ENCODE measurements at regions of chr19 and their contacts with region 1.

Region 1: DNA sequence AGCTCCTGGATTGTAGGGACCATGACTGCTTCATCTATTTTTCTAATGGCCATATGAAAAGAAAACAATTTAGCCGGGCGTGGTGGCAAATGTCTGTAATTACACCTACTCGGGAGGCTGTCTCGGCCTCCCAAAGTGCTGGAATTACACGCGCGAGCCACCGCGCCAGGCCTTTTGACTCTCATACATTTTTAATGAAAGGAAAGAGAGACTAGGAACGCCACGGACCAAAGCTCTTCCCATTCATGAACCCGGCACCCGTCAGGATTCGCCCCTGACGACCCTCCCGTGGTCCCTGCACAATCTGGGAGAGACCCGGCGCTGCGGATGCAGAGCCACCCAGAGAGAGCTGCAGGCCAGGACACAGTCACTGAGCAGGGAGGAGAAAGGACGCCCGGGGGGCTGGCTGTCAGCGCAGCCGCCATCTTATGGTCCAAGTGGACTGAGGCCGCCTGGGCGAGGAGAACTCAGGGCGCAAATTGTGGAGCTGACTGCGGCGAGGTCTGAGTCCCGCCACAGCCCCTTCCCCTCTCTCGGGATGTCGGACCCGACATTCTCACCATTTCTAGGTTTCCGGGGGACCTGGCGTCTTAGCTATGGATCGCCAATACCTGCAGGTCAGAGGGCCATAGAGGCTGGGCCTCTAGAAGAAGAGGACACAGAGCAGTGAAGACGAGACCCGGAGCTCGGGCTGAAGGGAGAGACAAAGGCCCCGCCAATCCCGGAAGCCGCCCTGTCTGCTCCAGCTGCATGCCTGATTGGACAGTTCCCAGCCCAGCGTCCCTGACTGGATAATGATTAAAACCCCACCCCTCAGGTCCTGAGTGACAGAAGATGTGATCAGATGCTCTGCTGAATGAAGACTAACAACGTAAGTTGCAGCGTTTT is at the start of gene ZNF681:
- DNase-seq: peak; percentile 89
- H3K4me3 ChIP-seq: peak within 1 kb of the TSS; percentile 75
- H3K27ac ChIP-seq: peak within 1 kb of the TSS; percentile 56
- H3K4me1 ChIP-seq: peaks cover 4% of the 10 kb centered on the region
- CTCF ChIP-seq: peak; percentile 32; the same call in 1 of the 2 replicates
- total RNA-seq, gene ZNF681: 3.1 and 4.3 TPM in 2 replicates

Region 2: DNA sequence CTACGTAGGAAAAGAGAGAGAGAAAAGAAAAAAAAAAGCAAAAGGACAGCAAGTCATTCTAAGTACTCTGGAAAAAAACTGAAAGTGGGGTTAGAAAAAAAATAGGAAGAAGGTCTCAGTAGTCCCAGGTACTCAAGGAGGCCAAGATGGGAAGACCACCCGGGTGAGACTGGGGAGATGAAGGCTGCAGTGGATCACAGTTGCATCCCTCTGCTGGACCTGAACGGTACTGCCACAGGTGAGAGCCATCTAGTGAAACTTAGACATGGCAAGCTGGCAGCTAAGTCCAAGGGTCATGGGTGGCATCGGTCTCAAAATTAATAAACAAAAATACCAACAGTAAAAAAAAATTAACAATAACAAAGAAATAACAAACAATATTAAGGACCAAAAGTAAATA is 322.1 kb before region 1 on chr19:
- CTCF ChIA-PET with region 1: no interaction called
- POLR2A ChIA-PET with region 1: no interaction called
- intact Hi-C with region 1: no loop called
- DNase-seq: peak; percentile 32
- H3K4me3 ChIP-seq: no peak overlapping the region
- H3K27ac ChIP-seq: no peak overlapping the region
- H3K4me1 ChIP-seq: no peaks in the 10 kb centered on the region
- CTCF ChIP-seq: peak; percentile 61

Region 3: DNA sequence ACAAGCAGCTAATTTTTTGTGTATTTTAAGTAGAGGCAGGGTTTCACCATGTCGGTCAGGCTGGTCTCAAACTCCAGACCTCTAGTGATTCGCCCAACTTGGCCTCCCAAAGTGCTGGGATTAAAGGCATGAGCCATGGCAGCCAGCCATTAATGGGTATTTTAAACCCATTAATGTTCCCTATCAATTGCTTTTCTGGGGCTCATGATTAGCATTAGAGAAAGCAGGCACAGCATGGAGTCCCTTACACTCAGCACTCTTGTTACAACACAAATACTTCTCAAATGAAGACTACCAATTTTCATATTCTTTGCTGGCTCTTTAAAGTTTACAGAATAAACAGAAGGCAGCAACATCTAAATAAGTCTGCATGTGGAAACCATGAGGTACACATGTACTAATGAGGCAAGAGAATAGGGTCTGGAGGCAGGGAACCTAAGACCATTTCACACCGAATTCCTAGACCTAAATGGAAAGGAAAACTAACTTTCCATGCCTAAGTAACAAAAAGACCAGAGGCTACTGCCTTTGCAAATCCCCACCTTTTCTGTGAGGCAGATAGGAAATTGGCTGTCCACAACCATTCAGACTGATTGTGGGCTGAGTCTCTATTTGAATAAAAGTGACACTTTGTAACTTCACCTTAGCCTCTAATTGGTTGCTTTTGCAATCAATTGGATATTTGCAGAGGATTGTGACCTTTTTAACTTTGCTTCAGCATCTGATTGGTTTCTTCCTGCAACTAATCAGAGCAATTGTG is 92.6 kb before region 1 on chr19:
- CTCF ChIA-PET with region 1: no interaction called
- POLR2A ChIA-PET with region 1: no interaction called
- intact Hi-C with region 1: no loop called
- DNase-seq: no peak
- H3K4me3 ChIP-seq: no peak overlapping the region
- H3K27ac ChIP-seq: no peak overlapping the region
- H3K4me1 ChIP-seq: peaks cover 6% of the 10 kb centered on the region
- CTCF ChIP-seq: no peak

Region 4: DNA sequence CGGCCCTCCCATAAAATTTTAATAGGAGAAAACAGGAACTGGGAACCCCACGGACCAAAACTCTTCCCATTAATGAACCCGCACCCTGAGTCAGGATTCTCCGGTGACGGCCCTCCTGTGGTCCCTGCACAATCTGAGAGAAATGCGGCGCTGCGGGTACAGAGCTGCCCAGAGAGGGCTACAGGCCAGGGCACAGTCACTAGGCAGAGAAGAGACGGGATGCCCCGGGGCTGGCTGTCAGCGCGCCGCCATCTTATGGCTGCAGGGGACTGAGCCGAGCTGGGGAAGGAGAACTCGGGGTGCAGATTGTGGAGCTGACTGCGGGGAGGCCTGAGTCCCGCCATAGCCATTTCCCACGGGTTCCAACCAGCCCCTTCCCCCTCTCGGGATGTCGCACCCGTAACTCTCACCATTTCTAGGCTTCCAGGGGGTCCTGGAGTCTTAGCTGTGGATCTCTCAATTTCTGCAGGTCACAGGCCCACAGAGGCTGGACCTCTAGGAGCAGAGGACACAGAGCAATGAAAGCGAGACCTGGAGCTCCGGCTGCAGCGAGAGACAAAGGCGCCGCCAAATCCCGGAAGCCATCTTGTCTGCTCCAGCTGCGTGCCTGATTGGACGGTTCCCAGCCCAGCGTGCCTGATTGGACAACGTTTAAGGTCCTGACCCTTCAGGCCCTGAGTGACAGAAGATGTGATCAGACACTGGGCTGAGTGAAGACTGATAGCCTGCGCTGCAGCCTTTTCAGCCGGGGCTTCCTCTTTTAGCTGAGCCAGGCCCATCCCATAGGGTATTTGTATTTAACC is 71.6 kb before region 1 on chr19 and contains the start of gene ZNF675:
- CTCF ChIA-PET with region 1: no interaction called
- POLR2A ChIA-PET with region 1: interaction called, 3 read pairs
- intact Hi-C with region 1: loop called (anchors 5 kb)
- DNase-seq: peak; percentile 96
- H3K4me3 ChIP-seq: peak within 1 kb of the TSS; percentile 77
- H3K27ac ChIP-seq: peak within 1 kb of the TSS; percentile 83
- H3K4me1 ChIP-seq: peaks cover 16% of the 10 kb centered on the region
- CTCF ChIP-seq: peak; percentile 19; the same call in 1 of the 2 replicates
- total RNA-seq, gene ZNF675: 22.6 and 29.7 TPM in 2 replicates

Region 5: GRCh38 chr19:23799321-23799720 is 40.9 kb after region 1 on chr19:
- CTCF ChIA-PET with region 1: no interaction called
- POLR2A ChIA-PET with region 1: interaction called, 6 read pairs
- intact Hi-C with region 1: loop called (anchors 5 kb)
- DNase-seq: peak; percentile 80
- H3K4me3 ChIP-seq: peak overlapping the region; percentile 44
- H3K27ac ChIP-seq: peak overlapping the region; percentile 84
- H3K4me1 ChIP-seq: peaks cover 41% of the 10 kb centered on the region
- CTCF ChIP-seq: no peak

Region 6: GRCh38 chr19:23817519-23817918 is 59.1 kb after region 1 on chr19:
- CTCF ChIA-PET with region 1: no interaction called
- POLR2A ChIA-PET with region 1: interaction called, 6 read pairs
- intact Hi-C with region 1: loop called (anchors 5 kb)
- DNase-seq: peak; percentile 82
- H3K4me3 ChIP-seq: no peak overlapping the region
- H3K27ac ChIP-seq: no peak overlapping the region
- H3K4me1 ChIP-seq: peaks cover 4% of the 10 kb centered on the region
- CTCF ChIP-seq: peak; percentile 80